ENCODE measurements at regions of chr6 and their contacts with region 1.

Region 1: GRCh38 chr6:169898797-169899480 is 147.5 kb downstream of the ERMARD start:
- DNase-seq: peak; percentile 14
- H3K4me3 ChIP-seq: no peak overlapping the region
- H3K27ac ChIP-seq: no peak overlapping the region
- H3K4me1 ChIP-seq: no peaks in the 10 kb centered on the region
- H3K27me3 ChIP-seq: no peaks in the 10 kb centered on the region
- CTCF ChIP-seq: no peak

Region 2: GRCh38 chr6:169839898-169840631 is 58.9 kb before region 1 on chr6:
- CTCF ChIA-PET with region 1: no interaction called
- dilution Hi-C with region 1: loop called (anchors 10 kb)
- in situ Hi-C with region 1: no loop called
- intact Hi-C with region 1: no loop called
- DNase-seq: no peak
- H3K4me3 ChIP-seq: no peak overlapping the region
- H3K27ac ChIP-seq: no peak overlapping the region
- H3K4me1 ChIP-seq: no peaks in the 10 kb centered on the region
- H3K27me3 ChIP-seq: no peaks in the 10 kb centered on the region
- CTCF ChIP-seq: no peak

Region 3: GRCh38 chr6:169868458-169868857 is 30.5 kb before region 1 on chr6:
- CTCF ChIA-PET with region 1: no interaction called
- dilution Hi-C with region 1: no loop called
- in situ Hi-C with region 1: no loop called
- intact Hi-C with region 1: no loop called
- DNase-seq: no peak
- H3K4me3 ChIP-seq: no peak overlapping the region
- H3K27ac ChIP-seq: no peak overlapping the region
- H3K4me1 ChIP-seq: no peaks in the 10 kb centered on the region
- H3K27me3 ChIP-seq: no peaks in the 10 kb centered on the region
- CTCF ChIP-seq: no peak

Region 4: GRCh38 chr6:170209572-170210351 is 310.8 kb after region 1 on chr6:
- CTCF ChIA-PET with region 1: no interaction called
- dilution Hi-C with region 1: no loop called
- in situ Hi-C with region 1: no loop called
- intact Hi-C with region 1: no loop called
- DNase-seq: no peak
- H3K4me3 ChIP-seq: no peak overlapping the region
- H3K27ac ChIP-seq: no peak overlapping the region
- H3K4me1 ChIP-seq: peaks cover 3% of the 10 kb centered on the region
- H3K27me3 ChIP-seq: no peaks in the 10 kb centered on the region
- CTCF ChIP-seq: no peak